ENCODE measurements at regions of chr20 and their contacts with region 1.

Region 1: DNA sequence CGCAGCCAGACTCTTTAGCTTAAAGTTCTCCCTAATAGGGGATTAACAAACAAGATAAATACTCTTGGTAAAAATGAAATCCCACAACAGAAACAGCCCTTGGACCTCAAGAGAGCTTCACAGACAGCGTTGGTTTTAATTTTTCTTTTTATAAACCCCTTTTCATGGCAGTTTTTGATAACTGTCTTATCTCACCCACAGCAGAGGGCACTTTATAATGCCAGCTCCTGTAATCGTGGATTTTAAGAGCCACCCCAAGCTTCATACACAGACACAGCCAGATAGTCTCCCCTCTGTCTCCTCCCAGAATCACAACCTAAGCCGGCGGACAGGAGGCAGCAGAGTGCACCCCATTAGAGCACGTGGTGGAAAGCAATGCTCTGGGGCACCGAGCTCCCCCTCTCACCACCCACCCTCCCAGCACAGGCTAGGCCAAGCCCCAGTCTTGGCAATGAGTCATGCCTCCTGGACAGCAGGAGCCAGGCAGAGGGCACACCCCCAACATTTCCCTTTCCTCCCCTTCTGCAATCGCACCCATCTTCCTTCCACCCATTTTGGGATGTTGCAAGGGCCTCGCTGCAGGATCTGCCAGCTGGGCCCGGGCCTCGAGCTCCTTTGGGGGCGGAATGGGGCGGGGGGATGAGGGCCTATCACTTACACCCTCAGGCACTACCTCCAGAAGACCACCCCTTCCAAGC is 2.4 kb downstream of the JAG1 start:
- DNase-seq: peak; percentile 90
- H3K4me3 ChIP-seq: peak overlapping the region; percentile 88
- H3K27ac ChIP-seq: peak overlapping the region; percentile 81
- H3K27me3 ChIP-seq: no peaks in the 10 kb centered on the region
- CTCF ChIP-seq: peak; percentile 83

Region 2: DNA sequence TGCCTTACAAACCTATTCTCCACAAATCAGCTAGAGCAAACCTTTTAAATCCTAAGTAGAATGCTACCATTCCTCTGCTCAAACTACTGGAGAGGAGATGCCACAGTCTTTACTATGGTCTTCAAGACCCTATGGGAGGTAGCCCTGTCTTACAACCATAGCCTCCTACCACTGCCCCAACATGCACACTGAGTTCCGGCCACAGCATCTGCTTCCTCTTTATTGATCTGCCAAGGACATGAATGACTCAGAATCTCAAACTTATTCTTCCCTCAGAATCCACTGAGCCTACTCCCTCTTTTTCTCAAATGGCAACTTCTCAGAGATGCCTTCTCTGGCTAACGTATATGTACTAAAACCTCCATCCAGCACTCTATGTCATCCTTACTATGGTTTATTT is 648.7 kb before region 1 on chr20:
- CTCF ChIA-PET with region 1: no interaction called
- POLR2A ChIA-PET with region 1: no interaction called
- DNase-seq: no peak
- H3K4me3 ChIP-seq: no peak overlapping the region
- H3K27ac ChIP-seq: no peak overlapping the region
- H3K27me3 ChIP-seq: no peaks in the 10 kb centered on the region
- CTCF ChIP-seq: no peak

Region 3: GRCh38 chr20:10434467-10434831 is 236.9 kb before region 1 on chr20:
- CTCF ChIA-PET with region 1: interaction called, 8 read pairs
- POLR2A ChIA-PET with region 1: interaction called, 13 read pairs
- DNase-seq: peak; percentile 98
- H3K4me3 ChIP-seq: peak overlapping the region; percentile 89
- H3K27ac ChIP-seq: peak overlapping the region; percentile 22
- H3K27me3 ChIP-seq: no peaks in the 10 kb centered on the region
- CTCF ChIP-seq: no peak

Region 4: DNA sequence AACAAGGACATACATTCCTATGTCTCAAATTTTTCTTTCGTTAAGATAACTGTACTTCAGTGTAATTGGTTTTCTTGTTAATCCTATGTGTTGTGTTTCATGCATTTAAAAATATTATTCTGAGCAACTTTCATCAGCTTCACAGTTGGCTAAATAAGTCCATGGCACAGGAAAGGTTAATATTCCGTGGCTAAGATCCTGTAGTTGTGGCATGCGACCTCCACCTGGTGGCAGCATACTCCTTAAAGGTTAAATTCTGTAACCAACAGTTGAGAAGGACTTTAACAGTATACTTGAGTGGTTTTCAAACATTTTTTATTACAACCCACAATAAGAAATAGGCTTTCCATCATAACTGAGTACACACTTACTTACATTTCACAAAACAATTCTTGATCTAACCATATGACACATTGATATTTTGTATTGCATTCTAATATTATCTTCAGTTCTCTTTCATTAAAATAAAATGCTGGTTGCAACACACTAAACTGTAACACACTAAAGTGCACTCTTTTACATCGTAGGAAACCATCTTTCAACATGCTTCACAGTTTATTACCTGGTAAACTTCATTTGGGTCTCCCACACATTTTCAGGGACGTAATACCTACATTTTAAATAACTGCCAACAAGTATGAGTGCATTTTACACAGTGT is 117.9 kb before region 1 on chr20:
- CTCF ChIA-PET with region 1: interaction called, 15 read pairs
- POLR2A ChIA-PET with region 1: interaction called, 8 read pairs
- DNase-seq: peak; percentile 55
- H3K4me3 ChIP-seq: no peak overlapping the region
- H3K27ac ChIP-seq: no peak overlapping the region
- H3K27me3 ChIP-seq: no peaks in the 10 kb centered on the region
- CTCF ChIP-seq: peak; percentile 83

Region 5: DNA sequence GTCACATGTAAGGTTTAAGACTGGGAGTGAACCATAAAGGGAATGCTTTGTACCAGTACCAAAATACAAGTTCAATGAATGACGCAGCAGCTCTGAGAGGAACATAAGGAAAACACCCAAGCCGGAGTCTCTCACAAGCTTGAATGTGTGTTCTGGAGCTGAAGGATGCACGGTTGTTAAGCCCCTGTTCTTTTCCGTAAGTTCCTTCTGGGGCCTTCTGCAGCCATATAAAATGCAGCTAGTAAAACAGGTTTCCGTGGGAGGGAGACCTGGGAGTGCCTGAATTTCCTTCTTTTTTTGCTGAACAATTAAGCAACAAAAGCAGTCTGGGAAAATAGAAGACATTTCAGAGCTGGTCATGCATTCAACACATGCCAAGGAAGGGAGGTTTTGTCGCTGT is 75.6 kb after region 1 on chr20:
- CTCF ChIA-PET with region 1: no interaction called
- POLR2A ChIA-PET with region 1: no interaction called
- DNase-seq: no peak
- H3K4me3 ChIP-seq: no peak overlapping the region
- H3K27ac ChIP-seq: no peak overlapping the region
- H3K27me3 ChIP-seq: no peaks in the 10 kb centered on the region
- CTCF ChIP-seq: no peak

Region 6: GRCh38 chr20:10922941-10923340 is 251.6 kb after region 1 on chr20:
- CTCF ChIA-PET with region 1: interaction called, 8 read pairs
- POLR2A ChIA-PET with region 1: interaction called, 11 read pairs
- DNase-seq: peak; percentile 91
- H3K4me3 ChIP-seq: peak overlapping the region; percentile 15; the same call in 1 of the 2 replicates
- H3K27ac ChIP-seq: peak overlapping the region; percentile 68
- H3K27me3 ChIP-seq: no peaks in the 10 kb centered on the region
- CTCF ChIP-seq: no peak

Region 7: GRCh38 chr20:11267131-11267761 is 595.9 kb after region 1 on chr20:
- CTCF ChIA-PET with region 1: interaction called, 10 read pairs
- POLR2A ChIA-PET with region 1: interaction called, 4 read pairs
- DNase-seq: peak; percentile 93
- H3K4me3 ChIP-seq: no peak overlapping the region
- H3K27ac ChIP-seq: peak overlapping the region; percentile 77
- H3K27me3 ChIP-seq: no peaks in the 10 kb centered on the region
- CTCF ChIP-seq: peak; percentile 50

Region 8: DNA sequence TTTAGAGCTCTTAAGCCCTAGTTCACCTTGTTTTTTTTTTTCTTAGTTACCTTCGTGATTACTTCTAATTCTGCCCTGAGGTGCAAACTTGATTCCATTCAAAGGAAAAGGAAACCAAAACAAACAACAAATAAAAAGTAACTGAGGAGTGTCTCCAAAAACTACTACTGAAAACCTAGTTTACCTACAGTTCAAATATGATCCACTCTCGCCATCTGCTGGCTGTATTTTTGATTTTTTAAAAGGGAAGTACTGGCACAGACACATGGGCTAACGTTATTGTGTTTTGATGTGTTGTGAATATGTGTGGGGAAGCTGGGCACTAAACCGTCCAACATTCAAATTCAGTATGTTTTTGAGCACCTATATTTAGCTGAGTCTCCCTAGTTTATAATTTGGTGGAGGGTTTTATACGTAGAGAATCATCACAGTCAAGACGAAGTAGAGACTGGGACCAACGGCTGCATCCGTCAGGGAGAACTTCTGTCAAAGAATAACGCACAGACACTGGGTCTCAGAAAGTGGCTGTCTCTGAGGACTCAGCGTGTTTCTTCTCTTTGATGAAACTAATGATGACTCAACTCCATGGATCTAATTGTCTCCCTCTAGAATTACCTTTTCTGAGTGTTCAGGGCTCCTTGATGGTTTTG is 872.8 kb after region 1 on chr20:
- CTCF ChIA-PET with region 1: interaction called, 21 read pairs
- POLR2A ChIA-PET with region 1: no interaction called
- DNase-seq: peak; percentile 37
- H3K4me3 ChIP-seq: peak overlapping the region; percentile 17
- H3K27ac ChIP-seq: no peak overlapping the region
- H3K27me3 ChIP-seq: no peaks in the 10 kb centered on the region
- CTCF ChIP-seq: peak; percentile 63

Measured in AG04450 (cell line).